Esophagus muscularis mucosa (tissue), 4 donors: ENCODE measurements at regions of chr10 and their contacts with region 1.

Region 1: DNA sequence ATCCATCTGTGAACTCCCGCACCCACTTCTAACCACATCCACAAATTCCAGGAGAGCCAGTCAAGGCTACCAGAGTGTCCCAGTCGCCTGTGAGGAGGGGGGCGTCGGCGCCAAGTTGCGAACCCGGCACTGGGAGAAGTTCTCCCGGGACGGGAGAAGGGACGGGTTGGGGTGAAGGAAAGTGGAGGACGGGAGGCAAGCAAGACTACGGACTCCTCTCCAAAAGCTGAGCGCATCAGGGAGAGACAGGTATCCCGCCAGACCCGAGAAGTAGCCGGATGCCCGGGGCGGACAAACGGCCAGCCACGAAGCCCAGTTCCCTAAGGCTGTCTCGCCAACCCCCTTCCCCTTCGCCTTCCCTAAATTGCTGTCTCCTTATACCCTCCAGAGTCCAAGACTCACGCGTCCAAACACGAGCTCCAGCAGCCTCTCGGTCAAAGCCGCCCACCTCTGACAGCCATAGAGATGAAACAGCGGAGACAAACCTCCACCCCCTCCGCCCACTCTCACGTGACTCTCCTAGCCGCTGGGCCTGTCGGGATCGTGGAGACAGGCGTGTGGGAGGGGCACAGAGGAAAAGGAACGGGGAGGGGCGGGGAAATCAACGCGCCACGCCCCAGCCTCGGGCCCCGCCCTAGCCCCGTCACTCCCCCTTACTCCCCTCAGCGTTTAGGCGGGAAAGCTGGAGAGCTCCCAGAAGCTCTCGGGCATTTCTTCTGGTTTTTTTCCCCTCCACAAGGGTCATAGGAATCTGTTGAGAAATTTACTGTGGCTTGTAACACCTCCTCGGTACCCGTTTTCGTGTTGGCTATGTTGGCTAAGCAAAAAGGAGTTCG is at the start of gene MICU1:
- DNase-seq: peak; percentile 99
- H3K4me3 ChIP-seq: peak within 1 kb of the TSS; percentile 79 to 90 (median 83)
- H3K27ac ChIP-seq: peak within 1 kb of the TSS; percentile 80 to 85 (median 84)
- H3K4me1 ChIP-seq: peaks cover 6 to 20% (median 19%) of the 10 kb centered on the region in 4 donors
- H3K27me3 ChIP-seq: no peaks in the 10 kb centered on the region
- CTCF ChIP-seq: peak in 1 of 3 experiments; percentile 4
- EP300 ChIP-seq: no peak
- POLR2A ChIP-seq: peak; percentile 11
- total RNA-seq, gene MICU1: 31.6 to 39.7 (median 35.0) TPM

Region 2: GRCh38 chr10:72364239-72364777 is 261.5 kb before region 1 on chr10:
- intact Hi-C with region 1: loop called (anchors 5 kb)
- DNase-seq: peak; percentile 95
- H3K4me3 ChIP-seq: peak overlapping the region; percentile 23 to 44 (median 29)
- H3K27ac ChIP-seq: peak overlapping the region; percentile 37 to 56 (median 48)
- H3K4me1 ChIP-seq: peaks cover 10 to 13% (median 11%) of the 10 kb centered on the region in 4 donors
- H3K27me3 ChIP-seq: no peaks in the 10 kb centered on the region
- CTCF ChIP-seq: peak; percentile 94 to 95 (median 95)
- EP300 ChIP-seq: no peak
- POLR2A ChIP-seq: no peak

Region 3: DNA sequence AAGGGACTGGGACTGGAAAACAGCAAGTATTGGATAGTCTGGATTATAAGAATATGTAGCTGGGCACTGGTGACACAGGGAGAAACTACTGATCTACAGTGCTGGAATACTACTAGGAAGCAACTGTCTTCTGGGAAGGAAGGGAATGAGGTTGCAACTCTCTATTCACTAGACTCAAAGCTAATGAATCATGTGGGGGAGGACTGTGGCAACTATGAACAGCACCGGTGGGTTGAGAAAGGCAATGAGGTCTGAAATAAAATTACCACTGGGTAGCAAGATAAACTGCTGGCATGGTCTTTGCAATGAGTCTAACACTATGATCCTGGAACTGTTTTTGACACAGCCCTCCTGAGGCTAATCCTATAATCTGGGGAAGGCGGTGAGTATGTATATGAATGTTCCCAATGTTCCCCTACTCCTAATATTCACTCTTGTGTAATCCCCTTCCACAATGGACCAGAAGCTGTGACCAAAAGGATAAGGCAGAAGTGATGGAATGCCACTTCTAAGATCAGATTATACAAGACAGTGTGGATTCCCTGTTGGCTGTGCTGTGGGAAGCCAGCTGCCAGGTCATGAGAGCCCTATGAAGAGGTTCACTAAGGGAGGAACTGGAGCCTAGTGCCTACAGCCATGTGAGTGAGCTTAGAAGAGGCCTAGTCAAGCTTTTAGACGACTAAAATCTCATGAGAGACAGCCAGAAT is 169.8 kb before region 1 on chr10:
- intact Hi-C with region 1: no loop called
- DNase-seq: no peak
- H3K4me3 ChIP-seq: no peak overlapping the region
- H3K27ac ChIP-seq: no peak overlapping the region
- H3K4me1 ChIP-seq: peaks cover 0 to 2% (median 0%) of the 10 kb centered on the region in 4 donors
- H3K27me3 ChIP-seq: no peaks in the 10 kb centered on the region
- CTCF ChIP-seq: no peak
- EP300 ChIP-seq: no peak
- POLR2A ChIP-seq: no peak

Region 4: GRCh38 chr10:72552857-72553256 is 73.0 kb before region 1 on chr10:
- intact Hi-C with region 1: no loop called
- DNase-seq: no peak
- H3K4me3 ChIP-seq: no peak overlapping the region
- H3K27ac ChIP-seq: no peak overlapping the region
- H3K4me1 ChIP-seq: no peaks in the 10 kb centered on the region
- H3K27me3 ChIP-seq: no peaks in the 10 kb centered on the region
- CTCF ChIP-seq: no peak
- EP300 ChIP-seq: no peak
- POLR2A ChIP-seq: no peak

Region 5: DNA sequence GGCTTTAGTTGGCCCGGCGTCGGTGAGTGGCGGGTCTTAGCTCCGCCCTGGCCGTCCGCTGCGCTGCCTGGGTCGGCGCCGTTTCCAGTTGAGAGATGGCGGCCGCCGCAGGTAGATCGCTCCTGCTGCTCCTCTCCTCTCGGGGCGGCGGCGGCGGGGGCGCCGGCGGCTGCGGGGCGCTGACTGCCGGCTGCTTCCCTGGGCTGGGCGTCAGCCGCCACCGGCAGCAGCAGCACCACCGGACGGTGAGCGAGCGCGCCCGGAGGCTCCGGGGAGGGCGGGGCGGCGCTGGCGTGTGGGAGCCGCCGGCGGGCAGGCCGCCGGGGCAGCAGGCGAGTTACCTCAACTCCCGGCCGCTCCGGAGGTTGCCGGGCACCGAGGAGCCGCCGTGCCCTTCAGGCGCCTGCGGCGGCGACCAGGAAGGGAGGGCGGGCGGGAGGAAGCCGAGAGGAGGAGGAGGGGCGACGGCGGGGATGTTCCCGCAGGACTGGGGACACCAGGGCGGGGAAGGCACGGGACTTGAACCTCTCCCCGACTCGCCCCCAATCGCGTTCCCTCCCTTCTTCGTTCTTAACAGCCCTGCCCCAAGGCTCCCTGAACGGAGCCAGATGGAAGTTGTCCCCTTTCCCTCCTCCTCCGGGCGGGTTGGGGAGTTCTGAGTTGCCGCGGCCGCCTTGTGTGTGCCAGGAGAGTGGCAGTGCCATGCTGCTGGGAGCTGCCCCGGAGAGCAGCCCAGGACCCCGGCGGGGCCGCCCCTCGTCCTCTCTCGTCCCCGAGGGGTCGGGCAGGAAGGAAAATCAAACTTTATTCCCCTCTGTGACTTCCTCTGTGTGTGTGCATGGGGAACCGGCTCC is 66.5 kb after region 1 on chr10 and contains the start of gene MCU:
- intact Hi-C with region 1: loop called (anchors 5 kb)
- DNase-seq: peak; percentile 98
- H3K4me3 ChIP-seq: peak within 1 kb of the TSS; percentile 83 to 88 (median 86)
- H3K27ac ChIP-seq: peak within 1 kb of the TSS; percentile 90 to 96 (median 94)
- H3K4me1 ChIP-seq: peaks cover 24 to 39% (median 36%) of the 10 kb centered on the region in 4 donors
- H3K27me3 ChIP-seq: no peaks in the 10 kb centered on the region
- CTCF ChIP-seq: peak in 1 of 3 experiments; percentile 8
- EP300 ChIP-seq: no peak
- POLR2A ChIP-seq: no peak
- total RNA-seq, gene MCU: 14.9 to 20.6 (median 19.5) TPM

Region 6: GRCh38 chr10:72834183-72834825 is 208.5 kb after region 1 on chr10:
- intact Hi-C with region 1: loop called (anchors 5 kb)
- DNase-seq: no peak
- H3K4me3 ChIP-seq: no peak overlapping the region
- H3K27ac ChIP-seq: no peak overlapping the region
- H3K4me1 ChIP-seq: peaks cover 10 to 30% (median 23%) of the 10 kb centered on the region in 4 donors
- H3K27me3 ChIP-seq: no peaks in the 10 kb centered on the region
- CTCF ChIP-seq: peak; percentile 63 to 81 (median 65)
- EP300 ChIP-seq: no peak
- POLR2A ChIP-seq: no peak

Region 7: DNA sequence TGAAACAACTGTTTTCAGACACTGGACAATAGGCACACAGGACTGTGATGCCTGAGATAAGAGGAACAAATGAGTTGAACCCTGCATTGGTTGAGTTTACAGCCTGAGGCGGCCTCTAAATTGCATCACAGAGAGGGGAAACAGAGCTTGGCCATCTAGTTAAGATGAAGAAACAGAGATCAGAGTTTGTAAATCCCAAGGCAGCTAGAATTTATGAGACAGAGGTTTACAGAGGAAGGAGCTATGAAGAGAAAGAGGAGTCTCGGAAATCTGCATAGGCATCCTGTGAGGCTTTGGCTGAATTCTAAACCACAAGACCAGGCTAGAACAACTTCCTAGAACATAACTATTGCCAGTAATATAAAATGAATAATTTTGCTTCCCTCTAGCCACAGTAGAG is 226.7 kb after region 1 on chr10:
- intact Hi-C with region 1: no loop called
- DNase-seq: no peak
- H3K4me3 ChIP-seq: no peak overlapping the region
- H3K27ac ChIP-seq: no peak overlapping the region
- H3K4me1 ChIP-seq: no peaks in the 10 kb centered on the region
- H3K27me3 ChIP-seq: no peaks in the 10 kb centered on the region
- CTCF ChIP-seq: no peak
- EP300 ChIP-seq: no peak
- POLR2A ChIP-seq: no peak